ENCODE measurements at regions of chr4 and their contacts with region 1.

Region 1: GRCh38 chr4:87679449-87680169 is 29.5 kb downstream of the DMP1 start:
- DNase-seq: peak in 4 of 5 donors; percentile 56 to 66 (median 60)
- ATAC-seq: peak; percentile 70 to 90 (median 80)
- H3K4me3 ChIP-seq: peak overlapping the region in 1 of 12 donors; percentile 9
- H3K27ac ChIP-seq: peak overlapping the region in 9 of 12 donors; percentile 18 to 63 (median 40)
- H3K4me1 ChIP-seq: peaks cover 0 to 21% (median 7%) of the 10 kb centered on the region in 12 donors
- H3K27me3 ChIP-seq: no peaks in the 10 kb centered on the region
- CTCF ChIP-seq: peak; percentile 71 to 91 (median 77)
- POLR2A ChIP-seq: no peak

Region 2: GRCh38 chr4:87353592-87353991 is 326.0 kb before region 1 on chr4:
- intact Hi-C with region 1: loop called in 1 of 10 experiments (anchors 10 kb)
- DNase-seq: peak in 3 of 5 donors; percentile 24 to 48 (median 31)
- ATAC-seq: peak in 3 of 4 donors; percentile 52 to 70 (median 65)
- H3K4me3 ChIP-seq: peak overlapping the region in 1 of 12 donors; percentile 7
- H3K27ac ChIP-seq: peak overlapping the region in 9 of 12 donors; percentile 5 to 76 (median 36)
- H3K4me1 ChIP-seq: peaks cover 0 to 21% (median 2%) of the 10 kb centered on the region in 12 donors
- H3K27me3 ChIP-seq: no peaks in the 10 kb centered on the region
- CTCF ChIP-seq: peak; percentile 36 to 77 (median 59)
- POLR2A ChIP-seq: no peak

Region 3: DNA sequence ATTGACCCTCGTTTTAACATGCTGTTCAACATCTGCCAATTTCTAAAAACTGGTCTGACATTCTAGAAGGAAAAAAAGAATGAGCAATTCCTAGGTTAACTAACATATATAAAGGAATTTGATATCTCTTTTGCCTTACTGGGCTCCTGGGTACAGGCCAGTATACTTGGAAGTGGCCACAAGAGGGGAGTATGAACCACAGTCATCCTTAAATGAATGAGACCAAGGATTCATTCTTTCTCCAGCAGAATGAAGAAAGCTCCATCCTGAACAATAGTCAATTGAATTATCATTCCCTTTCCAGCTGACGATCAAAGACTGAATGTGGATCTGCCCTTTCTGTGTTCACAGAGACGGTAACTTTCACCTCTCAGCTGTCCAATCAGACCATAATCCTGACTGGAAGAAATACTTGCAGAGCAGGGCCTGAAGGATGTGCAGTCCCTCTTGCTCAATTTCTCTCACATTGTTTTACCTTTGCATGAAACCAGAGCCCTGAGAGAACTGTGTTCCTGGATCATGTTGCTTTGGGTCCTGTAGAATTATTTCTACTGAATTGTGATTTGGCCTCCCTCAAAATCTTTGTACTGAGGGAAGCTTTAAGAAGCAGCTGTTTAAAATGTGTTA is 135.7 kb before region 1 on chr4:
- intact Hi-C with region 1: loop called in 5 of 10 experiments (anchors 5 to 10 kb)
- DNase-seq: peak in 2 of 5 donors; percentile 26 to 36
- ATAC-seq: peak in 3 of 4 donors; percentile 65 to 73 (median 68)
- H3K4me3 ChIP-seq: no peak overlapping the region
- H3K27ac ChIP-seq: peak overlapping the region in 2 of 12 donors; percentile 79
- H3K4me1 ChIP-seq: peaks cover 0 to 28% (median 0%) of the 10 kb centered on the region in 12 donors
- H3K27me3 ChIP-seq: no peaks in the 10 kb centered on the region
- CTCF ChIP-seq: peak; percentile 47 to 74 (median 58)
- POLR2A ChIP-seq: no peak

Region 4: GRCh38 chr4:87961993-87962392 is 282.4 kb after region 1 on chr4:
- intact Hi-C with region 1: loop called in 2 of 10 experiments (anchors 10 kb)
- DNase-seq: no peak
- ATAC-seq: no peak
- H3K4me3 ChIP-seq: no peak overlapping the region
- H3K27ac ChIP-seq: no peak overlapping the region
- H3K4me1 ChIP-seq: no peaks in the 10 kb centered on the region
- H3K27me3 ChIP-seq: no peaks in the 10 kb centered on the region
- CTCF ChIP-seq: no peak
- POLR2A ChIP-seq: no peak

Region 5: GRCh38 chr4:88211473-88212252 is 532.1 kb after region 1 on chr4:
- intact Hi-C with region 1: loop called in 5 of 10 experiments (anchors 5 to 10 kb)
- DNase-seq: peak in 2 of 5 donors; percentile 29 to 33
- ATAC-seq: peak in 3 of 4 donors; percentile 55 to 63 (median 62)
- H3K4me3 ChIP-seq: no peak overlapping the region
- H3K27ac ChIP-seq: no peak overlapping the region
- H3K4me1 ChIP-seq: peaks cover 0 to 3% (median 0%) of the 10 kb centered on the region in 12 donors
- H3K27me3 ChIP-seq: no peaks in the 10 kb centered on the region
- CTCF ChIP-seq: peak; percentile 62 to 86 (median 74)
- POLR2A ChIP-seq: no peak

Measured in heart left ventricle (tissue), 16 donors.